Gastrocnemius medialis (tissue), 4 donors: ENCODE measurements at regions of chr13 and their contacts with region 1.

Region 1: GRCh38 chr13:95378603-95379002 is 77.4 kb upstream of the ABCC4 start:
- DNase-seq: peak; percentile 76 to 87
- ATAC-seq: peak; percentile 89 to 92
- H3K4me3 ChIP-seq: no peak overlapping the region
- H3K27ac ChIP-seq: peak overlapping the region; percentile 63 to 84 (median 76)
- H3K4me1 ChIP-seq: peaks cover 17 to 22% of the 10 kb centered on the region in 2 donors
- H3K27me3 ChIP-seq: no peaks in the 10 kb centered on the region
- CTCF ChIP-seq: no peak
- POLR2A ChIP-seq: no peak

Region 2: DNA sequence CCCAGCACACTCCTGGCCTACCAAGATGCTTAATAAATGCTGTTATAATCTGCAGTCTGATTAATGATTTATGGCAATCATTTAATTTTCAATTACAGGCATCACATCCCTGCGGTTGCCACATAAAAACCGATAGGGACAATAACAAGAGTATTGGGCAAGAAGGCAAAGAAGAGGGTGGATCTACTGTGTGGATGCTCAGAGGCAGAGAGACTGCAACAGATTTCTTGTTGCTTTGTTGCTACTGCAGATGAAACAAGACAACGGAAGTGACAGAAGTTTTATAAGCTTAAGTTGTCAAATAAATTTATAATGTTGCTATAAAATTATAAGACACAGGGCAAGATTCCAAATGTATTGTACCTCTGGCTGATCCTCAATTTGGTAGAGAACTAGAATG is 232.1 kb before region 1 on chr13:
- in situ Hi-C with region 1: no loop called
- intact Hi-C with region 1: no loop called
- DNase-seq: no peak
- ATAC-seq: no peak
- H3K4me3 ChIP-seq: no peak overlapping the region
- H3K27ac ChIP-seq: no peak overlapping the region
- H3K4me1 ChIP-seq: no peaks in the 10 kb centered on the region
- H3K27me3 ChIP-seq: no peaks in the 10 kb centered on the region
- CTCF ChIP-seq: no peak
- POLR2A ChIP-seq: no peak

Region 3: GRCh38 chr13:95191821-95192563 is 186.6 kb before region 1 on chr13:
- in situ Hi-C with region 1: no loop called
- intact Hi-C with region 1: loop called (anchors 1 kb)
- DNase-seq: peak; percentile 31 to 72
- ATAC-seq: peak; percentile 60 to 69
- H3K4me3 ChIP-seq: no peak overlapping the region
- H3K27ac ChIP-seq: peak overlapping the region; percentile 43 to 70 (median 60)
- H3K4me1 ChIP-seq: peaks cover 18 to 23% of the 10 kb centered on the region in 2 donors
- H3K27me3 ChIP-seq: no peaks in the 10 kb centered on the region
- CTCF ChIP-seq: peak; percentile 74 to 83 (median 80)
- POLR2A ChIP-seq: no peak

Region 4: DNA sequence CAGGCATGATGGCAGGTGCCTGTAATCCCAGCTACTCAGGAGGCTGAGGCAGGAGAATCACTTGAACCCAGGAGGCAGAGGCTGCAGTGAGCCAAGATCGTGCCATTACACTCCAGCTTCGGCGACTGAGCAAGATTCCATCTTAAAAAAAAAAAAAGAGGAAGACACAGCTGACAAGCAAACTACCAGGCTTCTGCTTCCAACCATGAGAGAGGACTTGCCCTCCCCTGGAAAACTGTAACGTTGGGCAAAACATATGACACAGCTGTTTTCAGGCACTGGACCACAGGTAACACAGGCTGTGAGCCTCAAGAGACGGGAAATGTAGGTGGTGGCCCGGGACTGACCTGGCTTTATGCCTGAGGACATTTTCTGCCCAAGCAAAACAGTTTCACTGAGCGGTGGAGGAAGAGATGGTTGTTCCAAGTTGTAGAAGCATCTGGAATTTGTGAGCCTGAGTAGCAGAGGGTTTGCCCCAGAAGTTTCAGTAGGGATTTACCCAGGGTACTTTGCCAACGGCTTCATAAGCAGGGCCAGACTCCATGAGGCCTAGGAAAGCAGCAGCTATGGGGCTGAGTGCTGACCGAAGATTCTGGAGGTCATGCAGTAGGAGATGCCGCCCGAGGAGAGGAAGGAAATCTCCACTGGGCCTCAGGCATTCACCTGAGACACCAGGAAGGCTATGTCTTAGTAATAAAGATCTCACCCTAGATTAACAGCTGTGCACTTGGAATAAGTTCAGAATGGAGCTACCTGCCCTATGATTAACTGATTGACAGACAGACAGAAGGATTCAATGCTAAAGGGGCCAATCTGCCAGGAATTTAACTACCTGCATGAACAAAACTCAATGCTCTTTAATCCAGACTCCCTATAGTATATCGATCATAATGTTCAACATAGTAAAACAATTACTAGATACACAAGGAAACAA is 165.4 kb before region 1 on chr13:
- in situ Hi-C with region 1: no loop called
- intact Hi-C with region 1: no loop called
- DNase-seq: no peak
- ATAC-seq: peak in 1 of 2 donors; percentile 48
- H3K4me3 ChIP-seq: no peak overlapping the region
- H3K27ac ChIP-seq: no peak overlapping the region
- H3K4me1 ChIP-seq: peaks cover 0 to 5% of the 10 kb centered on the region in 2 donors
- H3K27me3 ChIP-seq: no peaks in the 10 kb centered on the region
- CTCF ChIP-seq: no peak
- POLR2A ChIP-seq: no peak

Region 5: DNA sequence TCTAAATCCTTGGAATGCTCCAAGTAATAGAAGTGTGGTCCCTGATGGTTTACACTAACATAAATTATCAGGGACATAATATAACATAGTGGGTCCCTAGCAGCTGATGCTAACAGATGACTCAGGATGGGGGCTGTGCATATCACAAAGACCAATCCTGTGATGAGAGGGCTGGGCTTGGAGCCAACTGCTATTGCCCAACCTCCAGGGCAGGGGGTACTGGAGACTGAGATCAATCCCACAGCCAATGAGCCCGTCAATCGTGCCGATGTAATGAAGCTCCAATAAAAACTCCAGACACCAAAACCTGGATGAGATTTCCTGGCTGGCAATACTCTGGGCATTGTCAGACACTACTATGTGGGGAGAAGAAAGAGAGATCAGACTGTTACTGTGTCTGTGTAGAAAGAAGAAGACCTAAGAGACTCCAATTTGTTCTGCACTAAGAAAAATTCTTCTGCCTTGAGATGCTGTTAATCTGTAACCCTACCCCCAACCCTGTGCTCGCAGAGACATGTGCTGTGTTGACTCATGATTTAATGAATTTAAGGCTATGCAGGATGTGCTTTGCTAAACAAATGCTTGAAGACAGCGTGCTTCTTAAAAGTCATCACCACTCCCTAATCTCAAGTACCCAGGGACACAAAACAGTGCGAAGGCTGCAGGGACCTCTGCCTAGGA is 110.8 kb before region 1 on chr13:
- in situ Hi-C with region 1: no loop called
- intact Hi-C with region 1: no loop called
- DNase-seq: no peak
- ATAC-seq: no peak
- H3K4me3 ChIP-seq: no peak overlapping the region
- H3K27ac ChIP-seq: peak overlapping the region; percentile 83 to 93 (median 89)
- H3K4me1 ChIP-seq: peaks cover 8 to 20% of the 10 kb centered on the region in 2 donors
- H3K27me3 ChIP-seq: no peaks in the 10 kb centered on the region
- CTCF ChIP-seq: no peak
- POLR2A ChIP-seq: no peak

Region 6: GRCh38 chr13:95292622-95293021 is 86.0 kb before region 1 on chr13:
- in situ Hi-C with region 1: loop called in 3 of 4 experiments (anchors 5 to 10 kb)
- intact Hi-C with region 1: loop called (anchors 1 kb)
- DNase-seq: no peak
- ATAC-seq: no peak
- H3K4me3 ChIP-seq: no peak overlapping the region
- H3K27ac ChIP-seq: no peak overlapping the region
- H3K4me1 ChIP-seq: peaks cover 0 to 12% of the 10 kb centered on the region in 2 donors
- H3K27me3 ChIP-seq: no peaks in the 10 kb centered on the region
- CTCF ChIP-seq: no peak
- POLR2A ChIP-seq: no peak

Region 7: DNA sequence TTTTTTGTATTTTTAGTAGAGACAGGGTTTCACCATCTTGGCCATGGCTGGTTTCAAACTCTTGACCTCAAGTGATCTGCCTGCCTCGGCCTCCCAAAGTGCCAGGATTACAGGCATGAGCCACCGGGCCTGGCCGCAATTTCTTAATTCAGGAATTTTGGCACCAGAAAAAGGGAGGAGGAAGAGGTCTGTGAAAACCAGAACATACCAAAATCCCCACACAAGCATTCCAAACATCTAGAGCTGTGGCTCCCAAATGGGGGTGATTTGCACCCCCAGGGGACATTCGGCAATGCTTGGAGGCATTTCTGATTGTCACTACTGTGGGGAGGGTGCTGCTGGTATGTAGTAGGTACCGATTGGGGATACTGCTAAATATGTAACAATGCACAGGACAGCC is 37.2 kb before region 1 on chr13:
- in situ Hi-C with region 1: no loop called
- intact Hi-C with region 1: loop called (anchors 5 kb)
- DNase-seq: no peak
- ATAC-seq: no peak
- H3K4me3 ChIP-seq: no peak overlapping the region
- H3K27ac ChIP-seq: no peak overlapping the region
- H3K4me1 ChIP-seq: peaks cover 5 to 16% of the 10 kb centered on the region in 2 donors
- H3K27me3 ChIP-seq: no peaks in the 10 kb centered on the region
- CTCF ChIP-seq: no peak
- POLR2A ChIP-seq: no peak